ENCODE measurements at regions of chr4 and their contacts with region 1.

Region 1: DNA sequence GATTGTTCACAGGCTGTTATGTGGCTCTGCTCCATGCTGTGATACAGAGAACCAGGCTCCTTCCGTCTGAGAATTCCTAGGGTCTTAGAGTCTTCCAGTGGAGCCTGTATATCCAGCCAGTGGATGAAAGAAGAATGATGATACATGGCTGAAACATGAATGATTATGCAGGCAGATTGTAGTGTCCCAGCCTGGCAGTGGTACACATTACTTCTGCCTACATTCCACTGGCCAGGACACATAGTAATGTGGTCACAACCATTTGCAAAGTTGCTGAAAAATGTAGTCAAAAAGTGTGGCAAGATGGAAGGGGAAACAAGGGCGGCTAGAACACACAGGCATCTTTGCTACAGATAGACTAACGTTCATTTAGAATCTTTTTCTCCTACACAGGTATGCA is 4.5 kb upstream of the GBA3 start:
- DNase-seq: no peak
- ATAC-seq: no peak
- H3K4me3 ChIP-seq: no peak overlapping the region
- H3K27ac ChIP-seq: no peak overlapping the region
- H3K4me1 ChIP-seq: peaks cover 17% of the 10 kb centered on the region; the same call in 1 of the 2 replicates
- H3K27me3 ChIP-seq: no peaks in the 10 kb centered on the region
- CTCF ChIP-seq: no peak
- EP300 ChIP-seq: no peak
- POLR2A ChIP-seq: no peak
- RAD21 ChIP-seq: no peak

Region 2: GRCh38 chr4:21780158-21780557 is 908.1 kb before region 1 on chr4:
- CTCF ChIA-PET with region 1: no interaction called
- POLR2A ChIA-PET with region 1: no interaction called
- in situ Hi-C with region 1: loop called (anchors 10 kb)
- intact Hi-C with region 1: no loop called
- DNase-seq: no peak
- ATAC-seq: no peak
- H3K4me3 ChIP-seq: no peak overlapping the region
- H3K27ac ChIP-seq: no peak overlapping the region
- H3K4me1 ChIP-seq: peaks cover 10% of the 10 kb centered on the region
- H3K27me3 ChIP-seq: no peaks in the 10 kb centered on the region; a peak in 1 of 5 replicates
- CTCF ChIP-seq: no peak
- EP300 ChIP-seq: no peak
- POLR2A ChIP-seq: no peak
- RAD21 ChIP-seq: no peak

Region 3: DNA sequence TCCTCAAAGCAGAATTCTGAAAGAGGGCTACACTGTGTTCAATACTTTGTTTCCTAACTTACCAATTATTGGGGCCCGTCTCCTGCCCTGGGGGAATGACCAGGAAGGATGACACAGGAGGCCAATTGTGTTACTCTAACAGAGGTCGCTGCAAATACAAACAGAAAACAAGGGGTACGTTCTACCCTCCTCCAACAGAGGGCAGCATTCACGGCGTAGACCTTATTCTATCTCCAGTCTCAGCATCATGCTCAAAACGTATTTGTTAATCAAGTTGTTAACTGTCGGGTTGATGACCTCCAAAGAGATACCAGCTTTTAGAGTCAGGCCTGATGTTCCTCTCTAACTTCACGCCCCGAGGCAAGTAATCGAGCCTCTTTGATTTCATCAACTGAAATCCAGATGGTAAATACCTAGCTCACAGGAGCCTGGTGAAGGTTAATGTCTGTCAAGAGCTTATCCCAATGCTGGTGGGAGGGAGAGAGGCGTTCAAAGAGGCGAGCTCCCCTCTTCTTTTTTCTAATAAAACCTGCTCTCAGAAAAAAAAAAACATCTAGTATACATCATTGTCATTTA is 558.7 kb before region 1 on chr4:
- CTCF ChIA-PET with region 1: no interaction called
- POLR2A ChIA-PET with region 1: no interaction called
- in situ Hi-C with region 1: no loop called
- intact Hi-C with region 1: loop called (anchors 1 kb)
- DNase-seq: peak; percentile 5
- ATAC-seq: peak; percentile 84
- H3K4me3 ChIP-seq: no peak overlapping the region
- H3K27ac ChIP-seq: no peak overlapping the region
- H3K4me1 ChIP-seq: no peaks in the 10 kb centered on the region
- H3K27me3 ChIP-seq: no peaks in the 10 kb centered on the region
- CTCF ChIP-seq: peak; percentile 70
- EP300 ChIP-seq: no peak
- POLR2A ChIP-seq: no peak
- RAD21 ChIP-seq: no peak

Region 4: DNA sequence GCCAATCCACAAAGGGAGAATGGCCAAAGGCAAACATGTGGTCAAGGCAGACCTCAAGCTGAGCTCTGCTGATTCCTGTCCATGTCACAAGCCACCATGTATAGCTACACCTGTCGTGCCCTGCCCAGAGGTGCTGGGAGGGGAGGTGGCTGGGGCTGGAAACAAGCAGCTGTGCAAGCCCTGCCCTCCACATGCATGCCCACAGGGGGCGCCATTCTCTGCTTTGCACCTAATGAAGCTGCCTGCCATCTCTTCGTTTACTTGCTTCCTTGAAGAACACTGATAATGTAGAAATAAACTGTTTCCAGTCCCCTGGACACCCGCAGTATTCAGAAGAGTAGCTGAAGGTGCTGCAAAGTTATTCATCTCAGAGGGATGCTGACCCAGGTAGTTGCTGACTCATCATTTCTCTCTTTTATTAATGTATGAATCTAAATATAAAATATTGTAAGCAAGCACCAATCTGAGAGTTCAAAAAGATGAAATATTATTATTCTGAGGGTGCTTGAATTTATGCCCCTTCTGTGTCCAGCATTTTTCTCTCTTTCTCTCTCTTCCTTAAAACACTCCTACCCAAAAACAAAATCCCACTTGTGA is 451.0 kb before region 1 on chr4:
- CTCF ChIA-PET with region 1: no interaction called
- POLR2A ChIA-PET with region 1: no interaction called
- in situ Hi-C with region 1: no loop called
- intact Hi-C with region 1: loop called (anchors 5 kb)
- DNase-seq: peak; percentile 15
- ATAC-seq: peak; percentile 62
- H3K4me3 ChIP-seq: no peak overlapping the region
- H3K27ac ChIP-seq: no peak overlapping the region
- H3K4me1 ChIP-seq: peaks cover 14% of the 10 kb centered on the region
- H3K27me3 ChIP-seq: no peaks in the 10 kb centered on the region; a peak in 1 of 5 replicates
- CTCF ChIP-seq: peak; percentile 46
- EP300 ChIP-seq: no peak
- POLR2A ChIP-seq: no peak
- RAD21 ChIP-seq: no peak

Region 5: GRCh38 chr4:22410645-22411247 is 277.5 kb before region 1 on chr4:
- CTCF ChIA-PET with region 1: interaction called, 15 read pairs
- POLR2A ChIA-PET with region 1: no interaction called
- in situ Hi-C with region 1: loop called (anchors 5 kb)
- intact Hi-C with region 1: loop called (anchors 1 kb)
- DNase-seq: peak; percentile 14
- ATAC-seq: no peak
- H3K4me3 ChIP-seq: no peak overlapping the region
- H3K27ac ChIP-seq: no peak overlapping the region
- H3K4me1 ChIP-seq: no peaks in the 10 kb centered on the region
- H3K27me3 ChIP-seq: no peaks in the 10 kb centered on the region
- CTCF ChIP-seq: 0 out of 2 replicates have a peak, but pooled peaks have one; percentile 21
- EP300 ChIP-seq: no peak
- POLR2A ChIP-seq: no peak
- RAD21 ChIP-seq: no peak

Region 6: GRCh38 chr4:22720091-22720490 is 31.9 kb after region 1 on chr4:
- CTCF ChIA-PET with region 1: no interaction called
- POLR2A ChIA-PET with region 1: no interaction called
- in situ Hi-C with region 1: no loop called
- intact Hi-C with region 1: no loop called
- DNase-seq: no peak
- ATAC-seq: no peak
- H3K4me3 ChIP-seq: no peak overlapping the region
- H3K27ac ChIP-seq: no peak overlapping the region
- H3K4me1 ChIP-seq: no peaks in the 10 kb centered on the region
- H3K27me3 ChIP-seq: no peaks in the 10 kb centered on the region
- CTCF ChIP-seq: no peak
- EP300 ChIP-seq: no peak
- POLR2A ChIP-seq: no peak
- RAD21 ChIP-seq: no peak

Region 7: GRCh38 chr4:22999419-22999818 is 311.2 kb after region 1 on chr4:
- CTCF ChIA-PET with region 1: no interaction called
- POLR2A ChIA-PET with region 1: no interaction called
- in situ Hi-C with region 1: no loop called
- intact Hi-C with region 1: no loop called
- DNase-seq: peak; percentile 3
- ATAC-seq: 0 out of 3 replicates have a peak, but pooled peaks have one; percentile 35
- H3K4me3 ChIP-seq: no peak overlapping the region
- H3K27ac ChIP-seq: no peak overlapping the region
- H3K4me1 ChIP-seq: no peaks in the 10 kb centered on the region
- H3K27me3 ChIP-seq: no peaks in the 10 kb centered on the region
- CTCF ChIP-seq: peak; percentile 36
- EP300 ChIP-seq: no peak
- POLR2A ChIP-seq: no peak
- RAD21 ChIP-seq: no peak

Measured in HepG2 (cell line).